ENCODE measurements at regions of chr6 and their contacts with region 1.

Region 1: DNA sequence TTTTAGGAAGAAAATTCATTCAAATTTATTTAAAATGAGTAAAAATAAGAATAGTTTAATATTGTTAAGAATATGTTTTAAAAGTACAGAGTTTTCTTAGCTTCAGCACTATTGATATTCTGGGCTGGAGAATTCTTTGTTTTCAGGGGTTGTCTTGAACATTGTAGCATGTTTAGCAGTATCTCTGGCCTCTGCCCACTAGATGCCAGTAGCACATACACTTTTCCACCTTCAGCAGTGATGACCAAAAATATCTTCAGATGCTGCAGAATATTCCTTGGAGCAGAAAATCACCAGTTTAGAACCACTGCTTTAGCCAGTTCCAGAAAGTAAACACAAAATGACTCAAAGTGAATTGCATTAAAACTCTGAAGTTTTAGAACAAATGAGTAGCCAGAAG is 19.4 kb upstream of the SDHAF4 start:
- ATAC-seq: peak in 7 of 8 experiments; percentile 33 to 79 (median 52)
- H3K4me3 ChIP-seq: no peak overlapping the region
- H3K27ac ChIP-seq: no peak overlapping the region
- H3K4me1 ChIP-seq: no peaks in the 10 kb centered on the region

Region 2: GRCh38 chr6:70857387-70858077 is 310.2 kb after region 1 on chr6:
- in situ Hi-C with region 1: loop called in 1 of 9 experiments (anchors 25 kb)
- ATAC-seq: no peak
- H3K4me3 ChIP-seq: no peak overlapping the region
- H3K27ac ChIP-seq: no peak overlapping the region
- H3K4me1 ChIP-seq: no peaks in the 10 kb centered on the region